ENCODE measurements at regions of chr14 and their contacts with region 1.

Region 1: GRCh38 chr14:55430024-55430690 is 10.3 kb downstream of the TBPL2 start:
- DNase-seq: peak; percentile 73
- H3K4me3 ChIP-seq: no peak overlapping the region
- H3K27ac ChIP-seq: no peak overlapping the region
- H3K4me1 ChIP-seq: no peaks in the 10 kb centered on the region
- H3K27me3 ChIP-seq: no peaks in the 10 kb centered on the region
- CTCF ChIP-seq: peak; percentile 23

Region 2: GRCh38 chr14:55212634-55213033 is 217.5 kb before region 1 on chr14:
- intact Hi-C with region 1: loop called (anchors 5 kb)
- DNase-seq: no peak
- H3K4me3 ChIP-seq: no peak overlapping the region
- H3K27ac ChIP-seq: no peak overlapping the region
- H3K4me1 ChIP-seq: no peaks in the 10 kb centered on the region
- H3K27me3 ChIP-seq: no peaks in the 10 kb centered on the region
- CTCF ChIP-seq: no peak

Region 3: GRCh38 chr14:55233591-55233990 is 196.6 kb before region 1 on chr14:
- intact Hi-C with region 1: no loop called
- DNase-seq: no peak
- H3K4me3 ChIP-seq: no peak overlapping the region
- H3K27ac ChIP-seq: no peak overlapping the region
- H3K4me1 ChIP-seq: no peaks in the 10 kb centered on the region
- H3K27me3 ChIP-seq: no peaks in the 10 kb centered on the region
- CTCF ChIP-seq: no peak

Region 4: DNA sequence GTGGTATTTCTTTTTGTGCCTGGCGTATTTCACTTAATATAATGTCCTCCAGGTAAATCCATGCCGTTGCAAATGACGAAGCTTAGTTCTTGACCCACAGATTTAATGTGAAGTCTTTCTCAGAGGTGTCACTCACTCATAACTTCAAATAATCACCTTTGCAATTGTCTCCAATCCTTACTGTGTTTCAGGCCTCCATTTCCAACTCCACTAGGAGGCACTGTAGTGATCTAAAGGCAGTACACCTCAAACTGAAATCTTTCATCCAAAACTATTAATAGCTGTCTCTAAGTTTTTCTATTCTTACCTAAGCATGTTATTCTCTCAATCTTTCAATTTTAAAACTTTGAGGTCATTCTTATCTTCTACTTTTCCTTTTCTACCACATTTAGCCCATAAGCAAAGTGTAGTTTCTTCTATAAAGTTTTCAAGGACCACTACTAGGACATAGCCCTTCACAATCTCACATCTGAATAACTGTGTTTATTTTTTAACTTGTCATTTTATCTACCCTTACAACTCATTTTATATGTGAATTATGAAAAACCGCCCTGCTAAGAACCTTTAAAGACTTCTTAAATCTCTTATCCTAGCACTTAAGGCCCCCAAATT is 184.4 kb before region 1 on chr14:
- intact Hi-C with region 1: loop called (anchors 10 kb)
- DNase-seq: peak; percentile 38
- H3K4me3 ChIP-seq: no peak overlapping the region
- H3K27ac ChIP-seq: no peak overlapping the region
- H3K4me1 ChIP-seq: no peaks in the 10 kb centered on the region
- H3K27me3 ChIP-seq: peaks cover 6% of the 10 kb centered on the region
- CTCF ChIP-seq: peak; percentile 54